Psoas muscle (tissue), 8 donors: ENCODE measurements at regions of chr20 and their contacts with region 1.

Region 1: GRCh38 chr20:17273717-17274116 is 46.9 kb downstream of the PCSK2 start:
- DNase-seq: no peak
- ATAC-seq: no peak
- H3K4me3 ChIP-seq: no peak overlapping the region
- H3K27ac ChIP-seq: no peak overlapping the region
- H3K4me1 ChIP-seq: no peaks in the 10 kb centered on the region
- H3K27me3 ChIP-seq: peaks cover 0 to 2% (median 0%) of the 10 kb centered on the region in 3 donors
- CTCF ChIP-seq: no peak

Region 2: GRCh38 chr20:17334932-17335331 is 61.2 kb after region 1 on chr20:
- intact Hi-C with region 1: loop called in 1 of 2 experiments (anchors 10 kb)
- DNase-seq: no peak
- ATAC-seq: no peak
- H3K4me3 ChIP-seq: no peak overlapping the region
- H3K27ac ChIP-seq: no peak overlapping the region
- H3K4me1 ChIP-seq: no peaks in the 10 kb centered on the region
- H3K27me3 ChIP-seq: no peaks in the 10 kb centered on the region
- CTCF ChIP-seq: no peak